Posterior vena cava (tissue), 2 donors: ENCODE measurements at regions of chr17 and their contacts with region 1.

Region 1: GRCh38 chr17:57114085-57114673 is 29.1 kb downstream of the AKAP1 start:
- DNase-seq: no peak

Region 2: GRCh38 chr17:56593646-56594527 is 520.3 kb before region 1 on chr17 and contains the start of gene NOG:
- intact Hi-C with region 1: no loop called
- DNase-seq: peak; percentile 89
- total RNA-seq, gene NOG: 1.3 to 2.4 TPM

Region 3: DNA sequence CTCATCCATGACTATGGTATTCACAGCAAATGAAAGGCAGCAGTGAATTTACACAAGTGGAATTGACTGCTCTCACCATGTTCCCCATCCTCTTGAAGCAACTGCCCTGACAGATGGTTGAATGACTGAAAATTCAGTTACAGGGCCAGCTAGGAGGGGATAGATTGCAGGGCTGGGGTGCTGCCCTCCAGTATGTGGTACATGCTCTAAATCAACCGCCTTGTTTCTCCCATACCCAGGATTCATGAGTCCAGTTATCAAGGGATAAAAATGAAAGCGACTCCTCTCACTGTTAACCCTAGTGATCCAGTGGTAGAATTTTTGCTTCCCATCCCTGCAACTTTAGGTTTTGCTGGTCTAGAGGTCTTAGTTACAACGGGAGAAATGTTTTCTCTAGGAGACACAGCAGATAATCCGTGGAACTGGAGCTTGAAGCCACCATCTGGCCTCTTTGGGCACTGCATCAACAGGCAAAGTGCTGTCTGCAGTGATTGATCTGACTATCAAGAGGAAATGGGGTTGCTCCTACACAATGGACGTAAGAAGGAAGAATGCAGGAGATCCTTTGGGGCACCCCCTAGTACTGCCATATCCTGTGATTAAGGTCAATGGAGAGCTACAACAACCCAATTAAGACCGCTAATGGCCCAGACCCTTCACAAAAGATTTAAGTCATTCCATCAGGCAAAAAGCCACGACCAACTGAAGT is 104.3 kb before region 1 on chr17:
- intact Hi-C with region 1: loop called in 1 of 2 experiments (anchors 10 kb)
- DNase-seq: no peak